Activated CD4-positive, alpha-beta memory T cell treated with anti-CD3 and anti-CD28 coated beads for 36 hours (primary cell): ENCODE measurements at regions of chr7 and their contacts with region 1.

Region 1: GRCh38 chr7:4973728-4974198 is 14.8 kb upstream of the MMD2 start:
- DNase-seq: peak; percentile 96
- H3K4me3 Mint-ChIP-seq: peak overlapping the region; percentile 97
- H3K27ac Mint-ChIP-seq: peak overlapping the region; percentile 92
- H3K4me1 Mint-ChIP-seq: peaks cover 19% of the 10 kb centered on the region
- H3K27me3 Mint-ChIP-seq: no peaks in the 10 kb centered on the region

Region 2: DNA sequence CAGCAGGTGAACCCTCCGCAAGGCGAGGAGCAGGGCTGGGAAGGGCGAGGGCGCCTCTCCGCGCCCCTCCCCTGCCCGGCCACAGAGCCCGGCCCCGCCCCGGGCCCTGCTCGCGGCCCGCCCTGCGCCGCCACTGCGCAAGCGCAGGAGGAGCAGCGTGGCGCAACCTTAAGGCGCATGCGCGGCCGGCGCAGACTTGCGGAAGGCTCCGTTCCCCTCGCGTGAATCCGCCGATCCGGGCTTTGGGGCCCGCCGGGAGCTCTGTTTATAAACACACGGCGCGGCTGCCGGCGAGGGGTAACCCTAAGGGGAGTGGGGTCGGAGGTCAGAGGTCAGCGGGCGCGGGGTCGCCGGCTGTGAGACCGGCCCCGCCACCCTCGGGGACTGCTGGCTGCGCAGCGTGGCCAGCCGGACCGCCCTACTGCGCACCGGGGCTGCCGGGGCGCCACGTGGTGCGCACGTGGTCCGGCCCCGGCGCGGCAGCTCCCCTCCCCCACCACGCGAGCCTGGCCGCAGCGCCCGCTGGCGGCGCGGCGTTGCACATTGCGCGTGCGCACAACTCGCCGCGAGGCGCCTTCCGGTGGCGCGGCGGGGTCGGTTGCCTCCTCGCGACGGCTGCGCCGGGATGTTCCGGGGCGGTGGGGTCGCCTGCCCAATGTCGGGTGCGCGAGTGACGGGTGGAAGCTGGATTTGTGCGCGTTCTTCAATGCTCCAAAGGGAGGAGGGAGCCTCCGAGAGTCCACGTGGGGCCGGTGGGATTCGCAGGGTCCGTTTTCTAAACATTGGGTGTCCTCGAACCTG is 331.9 kb before region 1 on chr7:
- CTCF ChIA-PET with region 1: interaction called, 3 read pairs
- POLR2A ChIA-PET with region 1: no interaction called
- intact Hi-C with region 1: loop called (anchors 5 kb)
- DNase-seq: peak; percentile 96
- H3K4me3 Mint-ChIP-seq: peak overlapping the region; percentile 87
- H3K27ac Mint-ChIP-seq: peak overlapping the region; percentile 91
- H3K4me1 Mint-ChIP-seq: peaks cover 12% of the 10 kb centered on the region
- H3K27me3 Mint-ChIP-seq: no peaks in the 10 kb centered on the region

Region 3: DNA sequence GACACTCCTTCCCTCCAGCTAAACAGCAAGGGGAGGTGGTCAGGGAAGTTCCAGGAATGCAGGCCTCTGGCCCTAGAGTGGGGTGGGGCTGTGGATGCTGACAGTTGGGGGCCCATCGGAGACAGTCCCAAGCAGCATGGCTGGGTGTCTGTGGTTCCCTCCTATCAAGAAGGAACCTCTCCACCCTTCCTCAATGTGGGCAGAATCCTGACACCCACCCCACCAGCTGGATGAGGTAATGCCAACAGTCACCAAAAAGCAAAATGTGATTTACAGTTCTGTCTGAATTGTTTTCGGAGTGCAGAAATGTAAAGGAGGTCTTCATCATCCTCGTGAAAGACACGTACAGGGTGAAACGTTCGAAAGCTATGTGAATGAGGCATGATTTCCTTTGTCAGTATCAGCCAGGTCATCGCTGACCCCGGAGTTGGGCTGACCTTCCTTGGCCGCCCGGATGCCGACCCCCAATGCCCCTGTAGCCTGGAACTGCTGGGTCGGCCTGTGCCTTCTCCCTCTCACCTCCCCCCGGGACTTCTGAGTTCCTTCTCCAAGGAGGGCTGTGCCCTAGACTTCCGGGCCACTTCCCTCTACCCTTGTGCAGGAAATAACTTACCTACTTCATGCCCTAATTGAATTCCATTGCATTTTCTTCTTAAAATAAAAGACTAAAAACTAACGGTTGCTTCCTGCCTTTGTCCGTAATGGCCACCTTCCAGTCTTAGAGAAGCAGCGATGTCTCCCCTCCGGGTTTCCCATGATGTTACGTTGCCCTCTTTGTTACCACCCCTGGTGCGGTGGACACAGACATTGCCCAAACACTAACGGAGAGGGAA is 267.2 kb before region 1 on chr7:
- CTCF ChIA-PET with region 1: no interaction called
- POLR2A ChIA-PET with region 1: no interaction called
- intact Hi-C with region 1: no loop called
- DNase-seq: no peak
- H3K4me3 Mint-ChIP-seq: no peak overlapping the region
- H3K27ac Mint-ChIP-seq: no peak overlapping the region
- H3K4me1 Mint-ChIP-seq: peaks cover 27% of the 10 kb centered on the region
- H3K27me3 Mint-ChIP-seq: no peaks in the 10 kb centered on the region

Region 4: DNA sequence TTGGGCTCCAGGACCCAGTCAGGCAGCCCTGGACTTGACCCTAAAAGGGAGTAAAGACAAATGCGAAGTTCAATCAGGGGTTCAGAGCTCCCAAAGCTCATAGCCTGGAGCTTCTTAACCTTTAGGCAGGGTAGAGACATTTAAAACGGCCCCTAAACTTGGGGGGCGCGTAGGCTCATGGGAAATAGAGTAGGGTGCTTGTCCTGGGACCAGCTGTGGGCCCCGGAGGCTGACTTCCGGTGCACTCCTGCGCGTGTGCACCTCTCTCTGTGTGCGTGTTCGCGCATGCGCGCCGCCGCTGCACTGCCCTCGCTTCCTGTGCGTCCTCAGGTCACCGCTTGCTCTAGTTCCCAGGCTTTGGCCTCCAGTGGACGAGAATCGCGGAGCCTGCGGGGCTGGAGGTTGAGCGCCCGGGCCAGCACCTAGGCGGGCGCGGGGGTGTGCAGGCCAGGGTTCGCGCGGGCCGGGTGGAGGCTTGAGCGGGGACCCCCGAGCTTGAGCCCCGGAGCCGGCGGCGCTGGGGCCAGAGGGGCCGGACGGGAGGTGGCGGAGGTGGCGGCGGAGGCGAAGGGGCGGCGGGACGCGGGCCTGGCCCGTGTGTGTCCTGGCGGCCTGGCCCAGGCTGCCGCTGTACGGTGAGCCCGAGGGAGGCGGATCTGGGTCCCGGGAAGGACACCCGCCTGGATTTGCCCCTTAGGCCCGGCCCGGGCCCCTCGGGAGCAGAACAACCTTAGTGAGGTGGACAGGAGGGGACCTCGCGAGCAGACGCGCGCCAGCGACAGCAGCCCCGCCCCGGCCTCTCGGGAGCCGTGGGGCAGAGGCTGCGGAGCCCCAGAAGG is 72.0 kb after region 1 on chr7 and contains the start of gene RBAK:
- CTCF ChIA-PET with region 1: interaction called, 8 read pairs
- POLR2A ChIA-PET with region 1: no interaction called
- intact Hi-C with region 1: loop called (anchors 1 kb)
- DNase-seq: peak; percentile 92
- H3K4me3 Mint-ChIP-seq: peak within 1 kb of the TSS; percentile 92
- H3K27ac Mint-ChIP-seq: peak within 1 kb of the TSS; percentile 74
- H3K4me1 Mint-ChIP-seq: peaks cover 33% of the 10 kb centered on the region
- H3K27me3 Mint-ChIP-seq: no peaks in the 10 kb centered on the region
- total RNA-seq, gene RBAK: 9.0 to 9.1 TPM

Region 5: GRCh38 chr7:5083311-5083711 is 109.5 kb after region 1 on chr7:
- CTCF ChIA-PET with region 1: interaction called, 46 read pairs
- POLR2A ChIA-PET with region 1: no interaction called
- intact Hi-C with region 1: loop called (anchors 1 kb)
- DNase-seq: no peak
- H3K4me3 Mint-ChIP-seq: no peak overlapping the region
- H3K27ac Mint-ChIP-seq: no peak overlapping the region
- H3K4me1 Mint-ChIP-seq: peaks cover 2% of the 10 kb centered on the region
- H3K27me3 Mint-ChIP-seq: peaks cover 14% of the 10 kb centered on the region